ENCODE measurements at regions of chr16 and their contacts with region 1.

Region 1: DNA sequence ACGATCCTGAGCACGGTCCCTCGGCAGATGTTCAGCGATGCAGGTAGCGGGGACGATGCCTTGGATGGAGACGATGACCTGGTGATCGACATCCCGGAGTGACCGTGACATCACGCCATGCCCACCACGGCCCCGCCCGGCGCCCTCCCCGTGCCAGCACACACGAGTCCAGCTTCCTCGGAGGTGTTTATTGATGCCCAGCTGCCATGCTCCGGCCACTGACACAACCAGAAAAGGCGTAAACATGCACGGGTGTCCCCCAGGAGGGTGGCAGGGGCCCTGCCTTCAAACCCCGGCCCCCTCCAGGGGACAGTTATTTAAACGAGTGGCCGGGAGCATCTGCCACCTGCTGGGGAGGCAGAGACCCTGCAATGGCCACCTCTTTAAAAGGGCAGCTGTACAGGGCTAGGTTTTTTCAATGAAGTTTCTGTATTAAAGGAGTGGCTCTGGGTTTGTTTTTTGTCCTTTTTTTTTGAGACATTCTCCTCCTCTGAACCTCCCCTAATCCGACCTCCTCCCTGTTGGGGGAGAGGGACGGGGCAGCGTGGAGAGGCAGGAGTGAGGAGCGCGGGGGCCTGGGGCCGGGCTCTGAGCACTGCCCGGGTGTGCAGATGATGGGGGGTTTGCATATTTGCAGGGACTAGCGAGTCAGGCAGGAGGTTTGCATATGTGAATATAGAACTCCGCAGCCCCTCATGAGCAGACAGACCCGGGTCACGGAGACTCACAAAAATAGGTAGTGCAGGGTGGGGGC is 5.3 kb downstream of the DOC2A start:
- DNase-seq: peak in 1 of 4 donors; percentile 76
- ATAC-seq: peak; percentile 74
- H3K4me3 ChIP-seq: no peak overlapping the region
- H3K27ac ChIP-seq: no peak overlapping the region
- H3K4me1 ChIP-seq: peaks cover 2 to 15% of the 10 kb centered on the region in 2 donors
- H3K27me3 ChIP-seq: peaks cover 12 to 34% of the 10 kb centered on the region in 2 donors
- CTCF ChIP-seq: peak; percentile 79 to 80

Region 2: DNA sequence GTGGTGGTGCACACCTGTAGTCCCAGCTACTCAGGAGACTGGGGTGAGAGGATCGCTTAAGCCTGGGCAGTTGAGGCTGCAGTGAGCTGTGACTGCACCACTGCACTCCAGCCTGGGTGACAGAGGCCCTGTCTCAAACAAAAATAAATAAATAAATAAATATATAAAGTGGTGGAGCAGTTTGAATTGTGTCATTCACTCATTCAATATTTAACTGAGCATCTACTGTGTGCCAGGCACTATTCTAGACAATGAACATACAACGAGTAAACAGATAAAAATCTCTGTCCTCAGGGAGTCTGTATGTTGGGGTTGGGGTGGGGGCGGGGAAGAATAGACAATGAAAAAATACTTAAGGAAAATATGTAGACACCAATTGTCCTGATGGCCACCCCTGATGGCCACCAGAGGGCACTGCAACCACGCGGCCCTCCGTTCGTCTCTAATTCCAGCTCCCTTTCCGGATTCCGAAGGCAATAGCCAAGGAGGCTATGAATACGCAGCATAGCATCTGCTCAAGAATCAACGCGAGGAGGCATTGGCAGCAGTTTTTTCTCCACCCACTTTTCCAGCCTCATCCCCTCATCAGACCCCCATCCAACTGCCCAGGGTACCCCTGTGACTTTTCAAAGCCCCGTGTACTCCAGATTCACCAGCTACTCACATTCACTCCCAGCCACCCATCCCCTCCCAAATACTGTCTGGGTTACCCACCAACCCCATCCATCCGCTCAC is 305.1 kb before region 1 on chr16:
- intact Hi-C with region 1: loop called in 1 of 2 experiments (anchors 10 kb)
- DNase-seq: peak; percentile 40 to 93 (median 76)
- ATAC-seq: peak; percentile 99
- H3K4me3 ChIP-seq: no peak overlapping the region
- H3K27ac ChIP-seq: no peak overlapping the region
- H3K4me1 ChIP-seq: peaks cover 0 to 4% of the 10 kb centered on the region in 2 donors
- H3K27me3 ChIP-seq: peaks cover 0 to 10% of the 10 kb centered on the region in 2 donors
- CTCF ChIP-seq: peak; percentile 84 to 85

Region 3: GRCh38 chr16:29815793-29816693 is 189.5 kb before region 1 on chr16 and contains the start of gene PAGR1:
- intact Hi-C with region 1: no loop called
- DNase-seq: peak; percentile 99 to 100 (median 100)
- ATAC-seq: peak; percentile 75
- H3K4me3 ChIP-seq: peak within 1 kb of the TSS; percentile 75 to 84
- H3K27ac ChIP-seq: peak within 1 kb of the TSS; percentile 97
- H3K4me1 ChIP-seq: peaks cover 26 to 74% of the 10 kb centered on the region in 2 donors
- H3K27me3 ChIP-seq: peaks cover 0 to 20% of the 10 kb centered on the region in 2 donors
- CTCF ChIP-seq: peak; percentile 71 to 88
- polyA plus RNA-seq, gene PAGR1: 27.5 to 40.6 (median 30.6) TPM

Region 4: DNA sequence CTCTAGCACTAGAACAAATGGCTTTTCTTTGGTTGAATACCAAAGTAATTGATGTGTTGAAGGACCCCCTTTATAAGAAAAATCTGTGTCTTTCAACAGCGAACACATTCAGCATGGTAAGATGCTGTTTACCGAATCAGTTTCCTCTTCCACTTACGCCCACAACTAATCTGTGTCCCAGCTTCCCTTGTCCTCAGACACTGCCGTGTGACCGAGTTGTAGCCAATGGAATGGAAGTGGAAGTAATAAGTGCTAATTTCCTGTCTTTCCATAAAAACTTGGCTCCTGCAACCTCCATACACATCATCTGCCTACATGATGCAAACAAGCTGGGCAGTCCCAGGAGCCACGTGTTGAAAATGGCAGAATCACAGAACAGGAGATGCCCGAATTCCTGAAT is 152.9 kb before region 1 on chr16:
- intact Hi-C with region 1: loop called in 1 of 2 experiments (anchors 10 kb)
- DNase-seq: peak in 1 of 4 donors; percentile 66
- ATAC-seq: peak; percentile 14
- H3K4me3 ChIP-seq: no peak overlapping the region
- H3K27ac ChIP-seq: peak overlapping the region in 1 of 2 donors; percentile 20
- H3K4me1 ChIP-seq: peaks cover 0 to 8% of the 10 kb centered on the region in 2 donors
- H3K27me3 ChIP-seq: no peaks in the 10 kb centered on the region
- CTCF ChIP-seq: no peak

Region 5: DNA sequence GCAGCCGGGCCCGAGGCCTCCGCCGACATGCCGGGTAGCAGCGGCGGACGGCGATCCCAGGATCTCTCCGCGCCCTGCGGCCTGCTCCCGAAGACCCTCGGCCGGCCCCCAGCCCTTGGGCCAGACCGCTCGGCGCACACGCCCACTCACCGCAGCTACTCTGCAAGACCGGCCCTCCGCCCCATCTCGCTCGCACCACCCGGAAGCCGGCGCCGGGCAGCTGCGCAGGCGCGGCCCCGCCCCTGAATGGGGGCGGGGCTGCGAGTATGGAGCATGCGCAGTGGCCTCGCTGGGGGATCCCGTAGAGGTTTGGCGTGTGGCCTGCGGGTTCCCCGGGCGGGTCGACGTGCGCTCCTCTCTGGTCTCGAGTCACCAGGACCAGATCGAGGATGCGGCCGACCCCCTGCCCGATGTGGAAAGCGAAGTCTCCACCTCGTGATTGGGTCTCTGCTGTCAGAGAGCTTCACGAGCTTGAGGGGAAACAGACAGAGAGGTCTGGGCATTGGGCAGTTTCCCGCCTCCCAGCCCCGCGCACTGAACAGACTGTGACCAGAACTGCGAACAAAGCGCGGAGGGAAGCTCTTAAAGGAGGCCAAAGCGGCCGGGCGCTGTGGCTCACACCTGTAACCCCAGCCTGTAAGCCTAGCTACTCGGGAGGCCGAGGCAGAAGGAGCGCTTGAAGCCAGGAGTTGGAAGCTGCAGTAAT is 79.4 kb before region 1 on chr16 and contains the start of gene KCTD13:
- intact Hi-C with region 1: loop called in 1 of 2 experiments (anchors 10 kb)
- DNase-seq: peak; percentile 86 to 95 (median 91)
- ATAC-seq: peak; percentile 98
- H3K4me3 ChIP-seq: peak within 1 kb of the TSS; percentile 99
- H3K27ac ChIP-seq: peak within 1 kb of the TSS; percentile 84 to 88
- H3K4me1 ChIP-seq: peaks cover 7 to 28% of the 10 kb centered on the region in 2 donors
- H3K27me3 ChIP-seq: no peaks in the 10 kb centered on the region
- CTCF ChIP-seq: no peak
- polyA plus RNA-seq, gene KCTD13: 18.3 to 24.2 (median 21.3) TPM

Measured in left lung (tissue), 14 donors.